Ascending aorta (tissue), 2 donors: ENCODE measurements at regions of chr10 and their contacts with region 1.

Region 1: DNA sequence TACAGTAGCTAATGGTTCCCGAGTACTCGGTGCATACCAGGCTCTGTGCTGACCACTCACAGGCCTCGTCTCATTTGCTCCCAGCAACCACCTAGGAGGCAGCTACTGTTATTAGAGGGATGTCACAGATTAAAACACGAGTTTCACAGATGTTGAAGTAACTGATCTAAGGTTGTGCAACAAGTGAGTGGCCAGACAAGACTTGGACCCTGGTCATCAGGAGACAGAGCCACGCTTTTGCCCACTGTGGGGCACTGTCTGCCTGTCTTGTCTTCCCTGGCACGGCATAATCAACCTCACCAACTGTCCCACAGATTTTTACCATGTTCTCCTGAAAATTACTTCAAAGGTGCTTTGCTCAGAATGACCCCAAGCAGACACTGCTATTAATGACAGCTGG is 111.6 kb upstream of the HABP2 start:
- DNase-seq: no peak
- H3K4me3 ChIP-seq: no peak overlapping the region
- H3K27ac ChIP-seq: no peak overlapping the region
- H3K4me1 ChIP-seq: no peaks in the 10 kb centered on the region
- H3K27me3 ChIP-seq: no peaks in the 10 kb centered on the region
- CTCF ChIP-seq: peak in 2 of 3 experiments; percentile 17 to 40

Region 2: GRCh38 chr10:113563306-113564088 is 122.3 kb after region 1 on chr10:
- intact Hi-C with region 1: loop called (anchors 2 kb)
- DNase-seq: peak in 1 of 2 donors; percentile 85
- H3K4me3 ChIP-seq: peak overlapping the region; percentile 49 to 51
- H3K27ac ChIP-seq: no peak overlapping the region
- H3K4me1 ChIP-seq: no peaks in the 10 kb centered on the region
- H3K27me3 ChIP-seq: no peaks in the 10 kb centered on the region
- CTCF ChIP-seq: peak; percentile 92 to 100 (median 99)

Region 3: GRCh38 chr10:113678690-113679462 is 237.7 kb after region 1 on chr10:
- intact Hi-C with region 1: no loop called
- DNase-seq: peak; percentile 57 to 95
- H3K4me3 ChIP-seq: peak overlapping the region; percentile 74 to 94
- H3K27ac ChIP-seq: peak overlapping the region; percentile 86 to 96
- H3K4me1 ChIP-seq: peaks cover 0 to 4% of the 10 kb centered on the region in 2 donors
- H3K27me3 ChIP-seq: no peaks in the 10 kb centered on the region
- CTCF ChIP-seq: peak; percentile 60 to 71 (median 66)